H1 (cell line): ENCODE measurements at regions of chr9 and their contacts with region 1.

Region 1: DNA sequence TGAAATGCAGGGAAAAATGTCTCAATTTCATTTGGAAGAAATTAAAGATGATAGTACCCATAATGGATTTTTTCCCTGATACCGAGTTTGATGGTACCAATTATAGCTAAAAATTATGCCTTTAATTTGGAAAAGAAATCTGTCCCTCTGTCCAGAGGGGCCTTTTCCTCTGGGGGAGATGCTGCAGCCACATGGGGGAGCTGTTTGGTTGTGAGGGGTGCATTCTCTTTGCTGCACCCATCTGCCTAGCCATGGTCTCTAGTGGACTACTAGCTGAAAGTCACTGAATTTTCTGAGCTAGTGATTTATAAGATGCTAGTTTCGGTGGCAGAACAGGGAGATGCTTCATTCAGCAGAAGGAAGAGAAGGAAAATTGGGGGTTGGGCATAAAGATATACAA is 9.6 kb downstream of the SEC61B start:
- DNase-seq: peak in 1 of 2 experiments; percentile 55
- H3K4me3 ChIP-seq: no peak overlapping the region
- H3K27ac ChIP-seq: no peak overlapping the region
- H3K4me1 ChIP-seq: no peaks in the 10 kb centered on the region
- H3K27me3 ChIP-seq: no peaks in the 10 kb centered on the region
- CTCF ChIP-seq: peak; percentile 68 to 73 (median 69)
- EP300 ChIP-seq: no peak
- POLR2A ChIP-seq: no peak
- RAD21 ChIP-seq: peak; percentile 58 to 65

Region 2: GRCh38 chr9:99197987-99198386 is 33.7 kb before region 1 on chr9:
- CTCF ChIA-PET with region 1: interaction called, 14 read pairs
- POLR2A ChIA-PET with region 1: no interaction called
- DNase-seq: no peak
- H3K4me3 ChIP-seq: no peak overlapping the region
- H3K27ac ChIP-seq: no peak overlapping the region
- H3K4me1 ChIP-seq: 0 out of 7 replicates have a peak, but pooled peaks cover 0 to 1% (median 0%) of the 10 kb centered on the region in 4 experiments
- H3K27me3 ChIP-seq: no peaks in the 10 kb centered on the region
- CTCF ChIP-seq: no peak
- EP300 ChIP-seq: no peak
- POLR2A ChIP-seq: no peak
- RAD21 ChIP-seq: no peak

Region 3: GRCh38 chr9:99211741-99212140 is 20.0 kb before region 1 on chr9:
- CTCF ChIA-PET with region 1: interaction called, 10 read pairs
- POLR2A ChIA-PET with region 1: no interaction called
- DNase-seq: no peak
- H3K4me3 ChIP-seq: no peak overlapping the region
- H3K27ac ChIP-seq: no peak overlapping the region
- H3K4me1 ChIP-seq: no peaks in the 10 kb centered on the region
- H3K27me3 ChIP-seq: no peaks in the 10 kb centered on the region
- CTCF ChIP-seq: peak; percentile 38 to 58 (median 48)
- EP300 ChIP-seq: no peak
- POLR2A ChIP-seq: no peak
- RAD21 ChIP-seq: peak in 1 of 2 experiments; percentile 28; a peak in 3 of 4 replicates

Region 4: DNA sequence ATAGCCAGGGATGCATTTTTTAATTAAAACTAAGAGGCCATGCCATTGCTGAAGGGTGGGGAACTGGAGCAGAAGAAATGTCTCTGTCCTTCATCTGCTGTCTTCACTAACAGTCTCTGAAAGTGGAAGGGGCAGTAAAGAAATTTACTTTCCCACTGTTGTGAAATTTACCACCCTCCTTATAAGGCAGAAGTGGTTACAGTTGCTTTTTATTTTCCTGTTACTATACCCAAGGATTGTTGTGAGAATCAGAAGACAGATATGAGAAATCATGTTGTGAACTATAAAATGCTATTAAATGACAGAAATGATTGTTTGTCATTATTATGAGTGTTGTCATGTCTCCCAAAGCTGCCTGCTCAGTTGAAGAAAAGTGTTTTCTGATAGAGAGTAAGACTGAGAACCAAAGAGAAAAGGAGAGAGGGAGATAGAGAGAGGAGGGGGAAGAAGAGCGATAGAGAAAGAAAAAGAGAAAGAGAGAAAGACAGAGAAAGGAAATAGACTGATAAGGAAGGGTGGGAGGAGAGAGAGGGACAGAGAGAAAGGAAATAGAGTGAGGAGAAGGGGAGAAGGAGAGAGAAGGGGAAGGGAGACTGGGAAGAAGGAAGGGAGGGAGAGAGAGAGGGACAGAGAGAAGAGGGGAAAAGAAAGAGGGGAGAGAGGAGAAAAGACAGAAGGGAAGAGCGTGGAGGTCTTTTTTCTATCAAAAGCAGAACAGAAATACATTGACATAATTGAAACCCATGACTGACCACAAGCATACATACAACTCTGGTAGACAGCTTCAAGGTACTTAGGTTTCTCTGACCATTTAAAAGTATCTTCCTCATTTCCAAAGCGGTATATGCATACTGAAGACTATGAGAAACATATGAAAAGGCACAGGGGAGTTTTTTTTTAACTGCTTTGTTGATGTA is 12.9 kb after region 1 on chr9:
- CTCF ChIA-PET with region 1: interaction called, 42 read pairs
- POLR2A ChIA-PET with region 1: interaction called, 3 read pairs
- DNase-seq: no peak
- H3K4me3 ChIP-seq: no peak overlapping the region
- H3K27ac ChIP-seq: no peak overlapping the region
- H3K4me1 ChIP-seq: no peaks in the 10 kb centered on the region
- H3K27me3 ChIP-seq: no peaks in the 10 kb centered on the region
- CTCF ChIP-seq: no peak
- EP300 ChIP-seq: no peak
- POLR2A ChIP-seq: no peak
- RAD21 ChIP-seq: no peak

Region 5: GRCh38 chr9:99259231-99259918 is 27.7 kb after region 1 on chr9:
- CTCF ChIA-PET with region 1: interaction called, 11 read pairs
- POLR2A ChIA-PET with region 1: no interaction called
- DNase-seq: peak in 1 of 2 experiments; percentile 67
- H3K4me3 ChIP-seq: no peak overlapping the region
- H3K27ac ChIP-seq: no peak overlapping the region
- H3K4me1 ChIP-seq: peaks cover 0 to 6% (median 5%) of the 10 kb centered on the region in 4 experiments; a peak in 5 of 7 replicates
- H3K27me3 ChIP-seq: no peaks in the 10 kb centered on the region; a peak in 2 of 7 replicates
- CTCF ChIP-seq: no peak
- EP300 ChIP-seq: no peak
- POLR2A ChIP-seq: no peak
- RAD21 ChIP-seq: no peak

Region 6: DNA sequence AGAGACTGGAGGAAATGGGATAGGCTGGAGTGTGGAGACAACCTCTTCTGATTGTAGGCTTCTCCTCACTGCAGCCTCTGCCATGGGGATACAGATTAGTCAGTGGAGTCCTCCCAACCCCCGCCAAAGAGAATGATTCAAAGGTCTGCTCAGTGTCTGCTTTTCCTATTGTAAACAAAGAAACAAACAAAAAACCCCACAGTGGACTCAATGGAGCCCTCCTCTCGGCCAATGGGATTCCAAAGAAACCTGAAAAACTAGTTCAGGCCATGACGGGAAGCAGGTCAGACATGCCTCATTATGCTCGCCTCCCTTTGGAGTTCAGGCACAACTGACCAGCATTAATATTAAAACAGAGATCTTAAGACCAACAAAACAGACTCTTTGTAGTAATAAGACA is 76.1 kb after region 1 on chr9:
- CTCF ChIA-PET with region 1: no interaction called
- POLR2A ChIA-PET with region 1: no interaction called
- DNase-seq: no peak
- H3K4me3 ChIP-seq: no peak overlapping the region
- H3K27ac ChIP-seq: no peak overlapping the region
- H3K4me1 ChIP-seq: peaks cover 0 to 5% (median under 1%) of the 10 kb centered on the region in 4 experiments; a peak in 3 of 7 replicates
- H3K27me3 ChIP-seq: no peaks in the 10 kb centered on the region
- CTCF ChIP-seq: no peak
- EP300 ChIP-seq: no peak
- POLR2A ChIP-seq: no peak
- RAD21 ChIP-seq: no peak

Region 7: GRCh38 chr9:99430301-99430700 is 198.6 kb after region 1 on chr9:
- CTCF ChIA-PET with region 1: no interaction called
- POLR2A ChIA-PET with region 1: no interaction called
- DNase-seq: no peak
- H3K4me3 ChIP-seq: no peak overlapping the region
- H3K27ac ChIP-seq: no peak overlapping the region
- H3K4me1 ChIP-seq: no peaks in the 10 kb centered on the region
- H3K27me3 ChIP-seq: no peaks in the 10 kb centered on the region
- CTCF ChIP-seq: no peak
- EP300 ChIP-seq: no peak
- POLR2A ChIP-seq: no peak
- RAD21 ChIP-seq: no peak